Right ventricle myocardium inferior (tissue), 1 donor: ENCODE measurements at regions of chr2 and their contacts with region 1.

Region 1: GRCh38 chr2:60530660-60531281 is 22.7 kb downstream of the BCL11A start:
- DNase-seq: peak; percentile 85
- ATAC-seq: no peak

Region 2: GRCh38 chr2:60484133-60484645 is 46.6 kb before region 1 on chr2:
- intact Hi-C with region 1: loop called (anchors 5 kb)
- DNase-seq: no peak
- ATAC-seq: peak; percentile 47

Region 3: DNA sequence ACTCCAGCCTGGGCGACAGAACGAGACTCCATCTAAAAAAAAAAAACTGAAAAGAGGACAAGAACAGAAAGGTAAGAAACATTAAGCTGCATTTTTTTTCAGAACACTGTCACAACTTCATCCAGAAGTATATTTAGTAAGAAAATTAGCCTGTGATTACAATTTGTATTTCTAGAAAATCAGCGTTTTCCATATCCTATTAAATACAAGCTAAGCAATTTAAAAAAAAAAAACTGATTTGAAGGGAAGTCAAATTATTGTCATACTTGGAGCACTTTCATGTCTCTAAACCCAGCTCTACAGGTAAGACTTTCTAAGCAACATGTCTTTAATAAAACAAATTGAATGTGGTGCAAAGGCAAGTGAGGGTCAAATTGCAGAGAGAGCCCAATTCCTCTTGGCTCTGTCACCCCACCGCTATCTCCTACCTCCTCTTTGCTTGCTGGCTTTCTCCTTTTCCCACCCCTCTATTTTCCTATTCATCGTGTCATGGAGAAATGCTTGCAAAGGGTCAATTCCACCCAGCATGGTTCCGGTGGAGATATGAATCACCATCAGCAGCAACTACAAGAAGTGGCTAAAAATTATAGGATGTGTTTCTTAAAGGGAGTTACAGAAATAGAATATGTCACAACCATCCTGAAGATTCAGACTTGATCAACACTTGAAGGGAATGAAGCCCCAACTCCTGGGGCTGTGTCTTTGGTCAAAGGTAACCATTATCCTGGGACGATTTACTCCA is 91.1 kb after region 1 on chr2:
- intact Hi-C with region 1: no loop called
- DNase-seq: no peak
- ATAC-seq: no peak